ENCODE measurements at regions of chr11 and their contacts with region 1.

Region 1: GRCh38 chr11:118359295-118359958 is at the start of gene UBE4A:
- DNase-seq: peak; percentile 61
- ATAC-seq: peak; percentile 98
- H3K4me3 ChIP-seq: peak within 1 kb of the TSS; percentile 55 to 99
- H3K27ac ChIP-seq: peak within 1 kb of the TSS; percentile 77
- H3K4me1 ChIP-seq: peaks cover 9% of the 10 kb centered on the region; the same call in 1 of the 2 replicates
- H3K27me3 ChIP-seq: no peaks in the 10 kb centered on the region
- CTCF ChIP-seq: no peak
- total RNA-seq, gene UBE4A: 57.9 TPM

Region 2: DNA sequence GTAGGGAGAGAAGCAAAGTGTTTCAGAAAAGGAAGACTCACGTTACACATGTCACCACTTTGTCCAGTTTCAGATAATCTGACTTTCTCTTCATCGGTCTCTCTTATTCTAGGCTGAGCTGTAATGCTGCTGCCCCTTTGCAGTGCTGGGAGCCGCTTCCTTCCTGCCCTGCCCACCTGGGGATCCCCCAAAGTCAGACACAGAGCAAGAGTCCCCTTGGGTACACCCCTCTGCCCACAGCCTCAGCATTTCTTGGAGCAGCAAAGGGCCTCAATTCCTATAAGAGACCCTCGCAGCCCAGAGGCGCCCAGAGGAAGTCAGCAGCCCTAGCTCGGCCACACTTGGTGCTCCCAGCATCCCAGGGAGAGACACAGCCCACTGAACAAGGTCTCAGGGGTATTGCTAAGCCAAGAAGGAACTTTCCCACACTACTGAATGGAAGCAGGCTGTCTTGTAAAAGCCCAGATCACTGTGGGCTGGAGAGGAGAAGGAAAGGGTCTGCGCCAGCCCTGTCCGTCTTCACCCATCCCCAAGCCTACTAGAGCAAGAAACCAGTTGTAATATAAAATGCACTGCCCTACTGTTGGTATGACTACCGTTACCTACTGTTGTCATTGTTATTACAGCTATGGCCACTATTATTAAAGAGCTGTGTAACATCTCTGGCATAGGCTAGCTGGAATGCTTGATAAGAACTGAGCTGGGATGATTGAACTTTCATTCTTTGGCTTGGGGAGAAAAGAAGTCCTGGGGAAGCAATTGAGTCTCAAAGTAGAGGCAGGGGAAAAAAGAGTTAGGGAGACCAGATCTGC is 241.4 kb before region 1 on chr11:
- CTCF ChIA-PET with region 1: no interaction called
- POLR2A ChIA-PET with region 1: no interaction called
- in situ Hi-C with region 1: no loop called
- intact Hi-C with region 1: no loop called
- DNase-seq: no peak
- ATAC-seq: 0 out of 2 replicates have a peak, but pooled peaks have one; percentile 28
- H3K4me3 ChIP-seq: no peak overlapping the region
- H3K27ac ChIP-seq: no peak overlapping the region
- H3K4me1 ChIP-seq: no peaks in the 10 kb centered on the region
- H3K27me3 ChIP-seq: peaks cover 36% of the 10 kb centered on the region
- CTCF ChIP-seq: no peak

Region 3: GRCh38 chr11:118142809-118143208 is 216.6 kb before region 1 on chr11:
- CTCF ChIA-PET with region 1: no interaction called
- POLR2A ChIA-PET with region 1: no interaction called
- in situ Hi-C with region 1: no loop called
- intact Hi-C with region 1: loop called (anchors 5 kb)
- DNase-seq: no peak
- ATAC-seq: no peak
- H3K4me3 ChIP-seq: no peak overlapping the region
- H3K27ac ChIP-seq: no peak overlapping the region
- H3K4me1 ChIP-seq: no peaks in the 10 kb centered on the region
- H3K27me3 ChIP-seq: peaks cover 37% of the 10 kb centered on the region
- CTCF ChIP-seq: no peak